T-cell (primary cell): ENCODE measurements at regions of chr6 and their contacts with region 1.

Region 1: GRCh38 chr6:121020656-121021055 is 313.6 kb downstream of the TBC1D32 start:
- DNase-seq: no peak
- ATAC-seq: no peak
- H3K4me3 ChIP-seq: no peak overlapping the region
- H3K4me3 Mint-ChIP-seq: no peak overlapping the region
- H3K27ac ChIP-seq: no peak overlapping the region
- H3K27ac Mint-ChIP-seq: no peak overlapping the region
- H3K4me1 ChIP-seq: no peaks in the 10 kb centered on the region
- H3K4me1 Mint-ChIP-seq: no peaks in the 10 kb centered on the region
- H3K27me3 ChIP-seq: no peaks in the 10 kb centered on the region
- H3K27me3 Mint-ChIP-seq: peaks cover 0 to 10% of the 10 kb centered on the region in 2 donors

Region 2: DNA sequence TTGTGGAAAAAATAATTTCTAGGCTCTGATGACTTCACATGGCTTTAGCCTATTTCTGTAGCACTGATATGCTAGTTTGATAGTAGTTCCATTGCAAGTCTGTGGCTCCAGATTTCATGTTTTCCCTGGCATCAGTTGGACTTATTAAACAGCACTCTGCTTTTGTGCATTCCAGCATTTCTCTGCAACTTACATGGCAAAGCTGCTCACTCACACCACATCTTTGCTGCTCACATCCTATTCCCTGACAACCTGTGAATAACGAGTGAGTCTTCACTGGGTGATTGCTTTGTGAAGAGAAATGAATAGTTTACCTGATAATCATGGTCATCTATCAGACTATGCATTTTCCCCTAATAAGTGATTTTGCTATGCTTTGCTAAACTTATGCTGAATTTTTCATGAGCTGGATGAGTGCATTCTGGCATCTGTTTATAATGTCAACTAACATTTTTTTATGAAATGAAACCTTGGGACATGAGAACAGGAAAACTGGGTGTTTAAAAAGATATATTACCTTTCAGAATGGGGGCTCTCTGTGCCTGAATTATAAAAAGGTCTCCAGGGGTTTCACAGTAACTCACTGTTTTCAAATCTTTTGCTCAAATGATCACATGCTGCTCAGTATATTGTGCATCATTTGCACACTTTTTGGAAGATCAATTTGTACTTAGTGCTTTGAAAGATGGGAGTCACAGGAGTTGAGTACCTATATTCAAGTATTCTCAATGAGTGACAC is 11.8 kb after region 1 on chr6:
- CTCF ChIA-PET with region 1: interaction called in 1 of 2 experiments, 10 read pairs
- POLR2A ChIA-PET with region 1: no interaction called
- DNase-seq: no peak
- ATAC-seq: no peak
- H3K4me3 ChIP-seq: no peak overlapping the region
- H3K4me3 Mint-ChIP-seq: no peak overlapping the region
- H3K27ac ChIP-seq: no peak overlapping the region
- H3K27ac Mint-ChIP-seq: no peak overlapping the region
- H3K4me1 ChIP-seq: no peaks in the 10 kb centered on the region
- H3K4me1 Mint-ChIP-seq: no peaks in the 10 kb centered on the region
- H3K27me3 ChIP-seq: no peaks in the 10 kb centered on the region
- H3K27me3 Mint-ChIP-seq: no peaks in the 10 kb centered on the region